PC-3 (cell line): ENCODE measurements at regions of chr3 and their contacts with region 1.

Region 1: DNA sequence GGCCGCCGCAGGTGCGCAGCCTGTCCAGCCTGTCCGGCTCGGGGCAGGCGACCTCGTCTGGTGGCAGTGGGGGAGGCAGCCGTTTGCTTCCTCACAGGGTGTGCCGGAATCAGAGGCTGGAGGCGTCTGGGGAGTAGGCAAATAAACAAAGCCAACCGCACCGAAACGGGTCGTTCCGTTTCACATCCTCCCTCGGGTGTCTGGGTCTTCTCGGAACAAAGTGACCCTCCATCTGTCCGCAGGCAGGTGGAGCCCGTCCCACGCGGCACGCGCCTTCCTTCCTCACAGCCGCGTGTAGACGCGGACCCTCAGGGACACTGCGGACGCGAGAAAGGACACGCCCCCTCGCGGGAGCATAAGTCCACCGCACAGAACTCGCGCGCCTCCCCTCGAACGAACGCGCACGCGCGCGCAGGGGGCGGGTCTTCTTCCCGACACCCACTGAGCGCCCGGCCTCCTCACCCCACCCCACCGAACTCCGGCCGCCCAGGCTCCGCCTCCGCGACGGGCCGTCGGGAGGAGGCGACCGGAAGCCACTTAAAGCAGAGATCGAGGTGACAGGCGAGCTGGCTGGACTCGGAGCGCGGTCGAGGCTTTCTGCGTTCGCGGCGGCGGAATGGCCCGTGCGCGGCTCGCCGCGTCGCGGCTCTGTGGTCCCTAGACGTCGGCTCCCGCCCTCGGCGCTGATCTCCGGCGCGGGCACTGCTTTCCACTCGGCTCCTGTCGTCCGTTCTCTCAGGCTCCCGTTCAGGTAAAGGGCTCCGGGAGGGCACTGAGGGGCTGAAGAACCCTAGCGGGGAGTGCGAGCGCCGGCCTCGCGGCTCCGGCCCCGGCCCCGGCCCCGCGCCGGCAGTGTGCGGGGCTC is at the start of gene TIPARP:
- DNase-seq: peak; percentile 99
- ATAC-seq: peak; percentile 79
- H3K4me3 ChIP-seq: peak within 1 kb of the TSS; percentile 96
- H3K27ac ChIP-seq: peak within 1 kb of the TSS; percentile 78
- H3K4me1 ChIP-seq: peaks cover 37% of the 10 kb centered on the region
- H3K27me3 ChIP-seq: no peaks in the 10 kb centered on the region
- CTCF ChIP-seq: peak; percentile 84
- total RNA-seq, gene TIPARP: 84.7 and 85.5 TPM in 2 replicates

Region 2: DNA sequence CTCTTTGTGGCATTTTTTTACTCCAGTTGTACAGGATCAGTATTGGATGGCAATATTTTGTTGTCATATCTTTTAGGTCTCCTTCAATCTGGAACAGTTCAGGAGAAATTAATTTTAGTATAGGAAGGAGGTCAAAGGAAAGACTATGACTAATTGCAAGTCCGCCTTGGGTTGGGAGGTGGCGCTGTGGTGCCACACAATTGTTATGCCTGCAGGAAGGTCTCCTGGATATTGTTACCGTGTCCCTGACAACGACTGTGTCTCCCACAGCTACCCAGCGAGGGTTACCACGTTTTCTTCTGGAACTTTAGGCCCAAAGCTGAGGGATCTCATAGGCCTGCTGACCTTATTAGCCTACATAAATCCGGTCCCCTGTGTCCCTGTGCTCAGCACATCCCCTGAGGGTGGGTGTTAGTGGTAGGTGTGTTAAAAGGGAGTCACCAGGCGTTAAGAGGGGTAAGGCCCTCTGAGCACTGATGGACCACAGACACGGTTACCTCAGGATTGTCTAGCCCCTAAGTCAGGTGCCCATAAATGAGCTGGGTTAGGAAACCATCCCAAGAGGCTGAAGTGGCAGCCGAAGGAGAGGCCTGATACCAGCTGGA is 522.4 kb before region 1 on chr3:
- CTCF ChIA-PET with region 1: no interaction called
- POLR2A ChIA-PET with region 1: no interaction called
- intact Hi-C with region 1: loop called (anchors 1 kb)
- DNase-seq: peak; percentile 80
- ATAC-seq: peak; percentile 80
- H3K4me3 ChIP-seq: no peak overlapping the region
- H3K27ac ChIP-seq: no peak overlapping the region
- H3K4me1 ChIP-seq: no peaks in the 10 kb centered on the region
- H3K27me3 ChIP-seq: no peaks in the 10 kb centered on the region
- CTCF ChIP-seq: peak; percentile 88

Region 3: GRCh38 chr3:156535162-156535627 is 139.1 kb before region 1 on chr3:
- CTCF ChIA-PET with region 1: interaction called, 26 read pairs
- POLR2A ChIA-PET with region 1: no interaction called
- intact Hi-C with region 1: loop called (anchors 1 kb)
- DNase-seq: peak; percentile 97
- ATAC-seq: peak; percentile 95
- H3K4me3 ChIP-seq: no peak overlapping the region
- H3K27ac ChIP-seq: peak overlapping the region; percentile 79
- H3K4me1 ChIP-seq: peaks cover 28% of the 10 kb centered on the region
- H3K27me3 ChIP-seq: no peaks in the 10 kb centered on the region
- CTCF ChIP-seq: peak; percentile 71

Region 4: GRCh38 chr3:156630081-156630772 is 44.1 kb before region 1 on chr3:
- CTCF ChIA-PET with region 1: no interaction called
- POLR2A ChIA-PET with region 1: no interaction called
- intact Hi-C with region 1: loop called (anchors 2 kb)
- DNase-seq: peak; percentile 84
- ATAC-seq: peak; percentile 90
- H3K4me3 ChIP-seq: peak overlapping the region; percentile 5; the same call in 1 of the 2 replicates
- H3K27ac ChIP-seq: peak overlapping the region; percentile 52
- H3K4me1 ChIP-seq: peaks cover 54% of the 10 kb centered on the region
- H3K27me3 ChIP-seq: no peaks in the 10 kb centered on the region
- CTCF ChIP-seq: no peak

Region 5: DNA sequence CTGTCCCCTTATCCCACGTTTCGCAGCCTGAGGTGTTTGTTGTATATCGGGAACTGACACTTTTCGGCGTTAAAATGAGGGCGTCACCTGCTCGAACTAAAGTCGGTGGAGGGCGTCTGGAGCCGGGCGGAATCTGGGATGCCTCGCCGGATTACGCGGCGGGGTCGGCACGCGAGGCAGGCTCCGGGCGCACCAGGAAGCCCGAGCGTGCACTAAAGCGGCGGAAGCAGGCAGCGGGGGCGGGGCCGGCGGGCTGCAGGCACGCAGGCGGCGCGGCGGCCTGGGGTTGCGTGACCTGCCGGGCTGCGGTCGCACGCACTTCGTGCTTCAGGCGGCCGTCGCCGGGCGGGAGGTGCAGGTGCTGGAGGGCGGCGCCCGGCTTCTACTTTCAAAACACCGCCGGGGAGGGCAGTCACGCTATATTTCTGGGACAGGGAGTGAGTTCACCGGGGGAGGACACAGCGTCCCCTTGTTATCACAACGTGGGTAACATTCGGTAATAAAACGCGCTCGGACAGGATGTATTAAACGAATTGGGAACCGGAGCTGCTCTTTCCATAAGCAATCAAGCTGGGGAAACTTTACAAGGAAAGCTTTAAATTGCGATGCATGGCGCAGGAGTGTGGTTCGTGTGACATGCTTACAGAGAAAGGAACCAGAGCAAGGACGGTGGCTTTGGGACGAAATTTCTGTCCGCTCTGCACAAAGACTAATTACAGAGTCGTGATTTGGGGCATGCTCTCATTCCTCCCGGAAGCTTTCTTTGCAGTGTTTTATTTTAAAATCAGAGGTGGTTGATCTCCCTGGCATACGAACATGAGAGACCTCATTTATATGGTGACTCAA is 142.7 kb after region 1 on chr3:
- CTCF ChIA-PET with region 1: no interaction called
- POLR2A ChIA-PET with region 1: interaction called, 6 read pairs
- intact Hi-C with region 1: loop called (anchors 1 kb)
- DNase-seq: peak; percentile 95
- ATAC-seq: peak; percentile 68
- H3K4me3 ChIP-seq: peak overlapping the region; percentile 64
- H3K27ac ChIP-seq: peak overlapping the region; percentile 98
- H3K4me1 ChIP-seq: peaks cover 65% of the 10 kb centered on the region
- H3K27me3 ChIP-seq: no peaks in the 10 kb centered on the region
- CTCF ChIP-seq: 0 out of 2 replicates have a peak, but pooled peaks have one; percentile 18

Region 6: GRCh38 chr3:156892701-156893100 is 218.4 kb after region 1 on chr3:
- CTCF ChIA-PET with region 1: no interaction called
- POLR2A ChIA-PET with region 1: interaction called, 4 read pairs
- intact Hi-C with region 1: loop called (anchors 10 kb)
- DNase-seq: peak; percentile 97
- ATAC-seq: peak; percentile 94
- H3K4me3 ChIP-seq: no peak overlapping the region
- H3K27ac ChIP-seq: peak overlapping the region; percentile 88
- H3K4me1 ChIP-seq: peaks cover 22% of the 10 kb centered on the region
- H3K27me3 ChIP-seq: no peaks in the 10 kb centered on the region
- CTCF ChIP-seq: no peak

Region 7: DNA sequence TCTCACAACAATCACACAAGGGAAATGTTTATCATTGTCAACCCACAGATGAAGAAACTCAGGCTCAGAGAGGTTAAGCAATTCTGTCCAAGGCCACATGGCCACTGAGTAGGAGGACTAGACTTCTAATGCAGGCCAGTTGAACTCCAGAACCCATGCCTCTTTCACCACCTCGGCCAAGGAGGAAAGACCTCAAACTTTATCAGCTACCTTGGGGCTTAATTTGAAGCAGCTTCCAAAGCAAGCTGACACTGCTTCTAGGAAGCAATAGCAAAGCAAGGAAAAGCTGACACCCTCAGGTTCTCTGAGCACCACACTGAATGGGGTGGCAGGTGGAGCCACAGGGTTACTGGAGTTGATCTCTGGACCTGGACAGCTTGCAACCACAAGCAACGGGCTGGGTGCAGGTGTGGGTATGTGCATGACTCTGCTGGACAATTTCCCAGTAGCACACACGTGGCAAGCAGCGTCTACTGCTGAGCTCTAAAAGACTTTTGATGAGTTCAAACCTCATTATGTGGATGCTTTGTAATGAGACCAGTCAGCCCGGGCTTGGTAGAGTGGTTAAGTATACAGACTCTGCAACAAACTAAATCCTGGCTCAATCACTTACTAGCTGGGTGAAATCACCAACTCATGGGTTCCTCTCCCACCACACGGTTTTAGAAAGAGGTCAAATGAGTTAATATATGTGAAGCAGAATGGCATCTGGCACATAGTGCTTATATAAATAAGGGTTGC is 462.5 kb after region 1 on chr3:
- CTCF ChIA-PET with region 1: interaction called, 7 read pairs
- POLR2A ChIA-PET with region 1: interaction called, 6 read pairs
- intact Hi-C with region 1: loop called (anchors 1 kb)
- DNase-seq: peak; percentile 63
- ATAC-seq: peak; percentile 27
- H3K4me3 ChIP-seq: no peak overlapping the region
- H3K27ac ChIP-seq: peak overlapping the region; percentile 99
- H3K4me1 ChIP-seq: peaks cover 56% of the 10 kb centered on the region
- H3K27me3 ChIP-seq: no peaks in the 10 kb centered on the region
- CTCF ChIP-seq: no peak